AG04449 (cell line): ENCODE measurements at regions of chr1 and their contacts with region 1.

Region 1: GRCh38 chr1:94709891-94710581 is 110.1 kb upstream of the SLC44A3 start:
- DNase-seq: no peak
- H3K4me3 ChIP-seq: no peak overlapping the region
- CTCF ChIP-seq: no peak

Region 2: DNA sequence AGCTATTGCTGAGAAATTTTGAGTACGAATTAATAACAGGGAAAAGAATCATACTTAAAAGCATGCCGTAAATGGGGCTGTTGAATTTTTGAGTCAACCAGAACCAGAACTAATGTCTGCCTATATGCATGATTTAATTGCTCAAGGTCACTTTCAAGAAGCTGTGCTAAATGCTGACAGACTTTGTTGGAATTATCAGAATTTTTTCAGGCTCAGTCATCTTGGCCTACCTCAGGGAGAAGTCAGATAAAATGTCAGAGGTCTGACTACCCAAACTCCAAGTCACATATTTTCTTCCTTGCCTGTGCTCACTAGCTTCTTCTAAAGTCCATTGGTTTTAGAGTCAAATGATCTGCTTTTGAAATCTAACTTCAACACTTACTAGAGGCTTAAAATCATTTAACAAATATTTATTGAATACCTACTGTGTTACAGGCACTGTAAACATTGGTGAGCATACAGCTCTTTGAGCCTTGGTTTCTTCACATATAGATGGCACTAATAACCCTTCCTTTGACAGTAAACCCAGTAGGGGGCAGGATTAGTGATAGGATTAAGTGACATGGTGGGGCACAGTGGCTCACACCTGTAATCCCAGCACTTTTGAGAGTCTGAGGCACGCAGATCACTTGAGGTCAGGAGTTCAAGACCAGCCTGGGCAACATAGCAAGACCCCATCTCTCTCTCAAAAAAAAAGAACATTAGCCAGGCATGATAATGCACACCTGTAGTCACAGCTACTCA is 11.1 kb before region 1 on chr1:
- CTCF ChIA-PET with region 1: interaction called, 10 read pairs
- POLR2A ChIA-PET with region 1: no interaction called
- DNase-seq: peak; percentile 68
- H3K4me3 ChIP-seq: no peak overlapping the region
- CTCF ChIP-seq: no peak